CD8-positive, alpha-beta T cell (primary cell): ENCODE measurements at regions of chrX and their contacts with region 1.

Region 1: GRCh38 chrX:135484641-135485289 is 35.7 kb upstream of the INTS6L start:
- DNase-seq: peak in 4 of 9 experiments; percentile 11 to 68 (median 41)
- ATAC-seq: no peak
- H3K4me3 ChIP-seq: no peak overlapping the region
- H3K4me3 Mint-ChIP-seq: no peak overlapping the region
- H3K27ac ChIP-seq: no peak overlapping the region
- H3K27ac Mint-ChIP-seq: no peak overlapping the region
- H3K4me1 ChIP-seq: no peaks in the 10 kb centered on the region
- H3K4me1 Mint-ChIP-seq: no peaks in the 10 kb centered on the region
- H3K27me3 ChIP-seq: peaks cover 0 to 2% of the 10 kb centered on the region in 2 experiments
- H3K27me3 Mint-ChIP-seq: no peaks in the 10 kb centered on the region
- CTCF ChIP-seq: peak; percentile 64

Region 2: DNA sequence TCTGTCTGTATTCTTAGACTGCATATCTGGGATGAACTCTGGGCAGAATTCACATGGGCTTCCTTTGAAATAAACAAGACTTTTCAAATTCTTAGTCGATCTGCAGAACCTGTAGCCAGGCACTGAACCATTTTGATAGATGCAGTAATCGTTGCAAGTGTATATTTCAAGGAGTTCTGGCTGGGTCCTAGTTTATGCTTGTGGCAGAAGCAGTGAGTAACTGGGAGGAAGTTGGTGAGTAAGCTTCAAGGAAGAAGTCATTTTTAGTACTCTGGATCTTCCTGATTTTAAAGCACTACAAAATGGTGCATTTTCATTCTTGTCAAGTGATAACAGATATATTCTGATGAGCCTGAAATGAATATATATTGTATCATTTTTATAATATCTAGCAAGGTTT is 1015.3 kb before region 1 on chrX:
- CTCF ChIA-PET with region 1: no interaction called
- POLR2A ChIA-PET with region 1: no interaction called
- intact Hi-C with region 1: no loop called
- DNase-seq: no peak
- ATAC-seq: no peak
- H3K4me3 ChIP-seq: no peak overlapping the region
- H3K4me3 Mint-ChIP-seq: no peak overlapping the region
- H3K27ac ChIP-seq: no peak overlapping the region
- H3K27ac Mint-ChIP-seq: no peak overlapping the region
- H3K4me1 ChIP-seq: no peaks in the 10 kb centered on the region
- H3K4me1 Mint-ChIP-seq: no peaks in the 10 kb centered on the region
- H3K27me3 ChIP-seq: no peaks in the 10 kb centered on the region
- H3K27me3 Mint-ChIP-seq: no peaks in the 10 kb centered on the region
- CTCF ChIP-seq: no peak

Region 3: DNA sequence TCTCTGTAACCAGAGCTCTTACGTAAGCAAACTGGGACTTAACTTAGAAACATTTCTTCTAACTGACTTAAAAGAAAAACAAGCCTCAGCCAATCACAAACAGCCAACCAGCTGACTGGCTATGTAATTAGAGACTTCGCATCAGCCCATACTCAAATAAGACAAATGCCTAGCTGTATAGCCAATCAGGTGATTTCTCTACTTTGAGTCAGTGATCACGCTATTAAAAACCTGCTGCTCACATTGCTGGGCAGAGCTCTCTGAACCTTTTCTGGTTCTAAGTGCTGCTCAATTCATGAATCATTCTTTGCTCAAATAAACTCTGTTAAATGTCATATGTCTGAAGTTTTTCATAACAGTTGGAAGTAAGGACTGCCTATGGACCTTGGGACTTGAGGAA is 72.9 kb before region 1 on chrX:
- CTCF ChIA-PET with region 1: no interaction called
- POLR2A ChIA-PET with region 1: no interaction called
- intact Hi-C with region 1: no loop called
- DNase-seq: no peak
- ATAC-seq: no peak
- H3K4me3 ChIP-seq: no peak overlapping the region
- H3K4me3 Mint-ChIP-seq: no peak overlapping the region
- H3K27ac ChIP-seq: no peak overlapping the region
- H3K27ac Mint-ChIP-seq: no peak overlapping the region
- H3K4me1 ChIP-seq: no peaks in the 10 kb centered on the region
- H3K4me1 Mint-ChIP-seq: peaks cover 6% of the 10 kb centered on the region
- H3K27me3 ChIP-seq: no peaks in the 10 kb centered on the region
- H3K27me3 Mint-ChIP-seq: no peaks in the 10 kb centered on the region
- CTCF ChIP-seq: no peak

Region 4: GRCh38 chrX:135572436-135572835 is 87.7 kb after region 1 on chrX:
- CTCF ChIA-PET with region 1: interaction called, 11 read pairs
- POLR2A ChIA-PET with region 1: no interaction called
- intact Hi-C with region 1: loop called (anchors 1 kb)
- DNase-seq: peak in 1 of 9 experiments; percentile 8
- ATAC-seq: no peak
- H3K4me3 ChIP-seq: no peak overlapping the region
- H3K4me3 Mint-ChIP-seq: no peak overlapping the region
- H3K27ac ChIP-seq: no peak overlapping the region
- H3K27ac Mint-ChIP-seq: no peak overlapping the region
- H3K4me1 ChIP-seq: no peaks in the 10 kb centered on the region
- H3K4me1 Mint-ChIP-seq: peaks cover 5% of the 10 kb centered on the region
- H3K27me3 ChIP-seq: no peaks in the 10 kb centered on the region
- H3K27me3 Mint-ChIP-seq: no peaks in the 10 kb centered on the region
- CTCF ChIP-seq: peak; percentile 49

Region 5: GRCh38 chrX:135581496-135581895 is 96.7 kb after region 1 on chrX:
- CTCF ChIA-PET with region 1: interaction called, 10 read pairs
- POLR2A ChIA-PET with region 1: no interaction called
- intact Hi-C with region 1: no loop called
- DNase-seq: no peak
- ATAC-seq: no peak
- H3K4me3 ChIP-seq: no peak overlapping the region
- H3K4me3 Mint-ChIP-seq: no peak overlapping the region
- H3K27ac ChIP-seq: no peak overlapping the region
- H3K27ac Mint-ChIP-seq: no peak overlapping the region
- H3K4me1 ChIP-seq: no peaks in the 10 kb centered on the region
- H3K4me1 Mint-ChIP-seq: peaks cover 5% of the 10 kb centered on the region
- H3K27me3 ChIP-seq: no peaks in the 10 kb centered on the region
- H3K27me3 Mint-ChIP-seq: no peaks in the 10 kb centered on the region
- CTCF ChIP-seq: no peak

Region 6: DNA sequence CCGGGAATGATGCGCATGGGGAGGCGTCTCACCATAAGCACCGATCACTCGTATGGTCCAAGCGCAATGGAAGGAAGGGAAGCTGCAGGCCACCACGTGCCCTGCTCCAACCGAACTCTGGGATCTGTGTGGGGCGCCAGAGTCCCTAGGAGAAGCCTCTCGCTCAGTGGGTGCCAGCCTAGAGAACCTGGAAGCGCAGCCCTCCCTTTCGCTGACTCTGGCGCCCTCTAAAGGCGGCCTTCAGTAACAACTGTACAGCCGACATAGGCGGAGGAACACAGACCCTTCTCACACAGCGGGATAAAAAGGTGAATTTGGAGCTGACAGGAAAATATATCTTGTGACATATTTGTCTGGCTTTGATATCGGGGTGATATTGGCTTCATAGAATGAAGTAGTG is 111.7 kb after region 1 on chrX:
- CTCF ChIA-PET with region 1: interaction called, 4 read pairs
- POLR2A ChIA-PET with region 1: no interaction called
- intact Hi-C with region 1: loop called (anchors 1 to 2 kb)
- DNase-seq: peak in 6 of 9 experiments; percentile 17 to 59 (median 44)
- ATAC-seq: peak; percentile 44
- H3K4me3 ChIP-seq: no peak overlapping the region
- H3K4me3 Mint-ChIP-seq: no peak overlapping the region
- H3K27ac ChIP-seq: no peak overlapping the region
- H3K27ac Mint-ChIP-seq: no peak overlapping the region
- H3K4me1 ChIP-seq: no peaks in the 10 kb centered on the region
- H3K4me1 Mint-ChIP-seq: no peaks in the 10 kb centered on the region
- H3K27me3 ChIP-seq: no peaks in the 10 kb centered on the region
- H3K27me3 Mint-ChIP-seq: peaks cover 6% of the 10 kb centered on the region
- CTCF ChIP-seq: peak; percentile 31

Region 7: GRCh38 chrX:135697601-135698000 is 212.8 kb after region 1 on chrX:
- CTCF ChIA-PET with region 1: no interaction called
- POLR2A ChIA-PET with region 1: no interaction called
- intact Hi-C with region 1: loop called (anchors 2 kb)
- DNase-seq: peak in 2 of 9 experiments; percentile 1 to 4
- ATAC-seq: no peak
- H3K4me3 ChIP-seq: no peak overlapping the region
- H3K4me3 Mint-ChIP-seq: no peak overlapping the region
- H3K27ac ChIP-seq: no peak overlapping the region
- H3K27ac Mint-ChIP-seq: no peak overlapping the region
- H3K4me1 ChIP-seq: no peaks in the 10 kb centered on the region
- H3K4me1 Mint-ChIP-seq: no peaks in the 10 kb centered on the region
- H3K27me3 ChIP-seq: no peaks in the 10 kb centered on the region
- H3K27me3 Mint-ChIP-seq: peaks cover 4% of the 10 kb centered on the region
- CTCF ChIP-seq: no peak

Region 8: GRCh38 chrX:135931644-135932487 is 447.1 kb after region 1 on chrX:
- CTCF ChIA-PET with region 1: no interaction called
- POLR2A ChIA-PET with region 1: no interaction called
- intact Hi-C with region 1: loop called (anchors 5 to 10 kb)
- DNase-seq: peak in 7 of 9 experiments; percentile 0 to 61 (median 30)
- ATAC-seq: peak; percentile 38
- H3K4me3 ChIP-seq: no peak overlapping the region
- H3K4me3 Mint-ChIP-seq: no peak overlapping the region
- H3K27ac ChIP-seq: no peak overlapping the region
- H3K27ac Mint-ChIP-seq: no peak overlapping the region
- H3K4me1 ChIP-seq: no peaks in the 10 kb centered on the region
- H3K4me1 Mint-ChIP-seq: no peaks in the 10 kb centered on the region
- H3K27me3 ChIP-seq: no peaks in the 10 kb centered on the region
- H3K27me3 Mint-ChIP-seq: no peaks in the 10 kb centered on the region
- CTCF ChIP-seq: peak; percentile 65